ENCODE measurements at regions of chr3 and their contacts with region 1.

Region 1: DNA sequence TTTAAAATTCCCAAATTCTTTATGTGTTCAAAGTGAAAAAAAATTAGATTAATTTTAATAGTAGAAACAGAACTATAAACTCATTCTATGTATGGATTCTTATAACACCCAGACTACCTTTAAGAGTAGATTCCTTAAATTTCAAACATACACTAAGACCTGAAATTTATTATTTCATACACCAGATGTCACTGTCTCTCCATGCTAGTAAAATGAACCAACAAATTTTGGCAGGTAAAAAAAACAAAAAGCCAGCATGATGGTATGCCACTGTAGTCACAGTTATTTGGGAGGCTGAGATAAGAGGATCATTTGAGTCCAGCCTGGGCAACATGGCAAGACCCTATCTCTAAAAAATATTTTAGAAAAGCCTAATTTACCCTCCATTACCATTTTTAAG is 461.3 kb upstream of the NAALADL2 start:
- DNase-seq: peak in 1 of 35 experiments; percentile 19
- ATAC-seq: no peak
- H3K4me3 ChIP-seq: no peak overlapping the region
- H3K4me3 Mint-ChIP-seq: no peak overlapping the region
- H3K27ac ChIP-seq: no peak overlapping the region
- H3K27ac Mint-ChIP-seq: no peak overlapping the region
- H3K4me1 ChIP-seq: no peaks in the 10 kb centered on the region
- H3K4me1 Mint-ChIP-seq: no peaks in the 10 kb centered on the region
- H3K27me3 ChIP-seq: no peaks in the 10 kb centered on the region
- H3K27me3 Mint-ChIP-seq: peaks cover 0 to 4% of the 10 kb centered on the region in 2 donors

Region 2: DNA sequence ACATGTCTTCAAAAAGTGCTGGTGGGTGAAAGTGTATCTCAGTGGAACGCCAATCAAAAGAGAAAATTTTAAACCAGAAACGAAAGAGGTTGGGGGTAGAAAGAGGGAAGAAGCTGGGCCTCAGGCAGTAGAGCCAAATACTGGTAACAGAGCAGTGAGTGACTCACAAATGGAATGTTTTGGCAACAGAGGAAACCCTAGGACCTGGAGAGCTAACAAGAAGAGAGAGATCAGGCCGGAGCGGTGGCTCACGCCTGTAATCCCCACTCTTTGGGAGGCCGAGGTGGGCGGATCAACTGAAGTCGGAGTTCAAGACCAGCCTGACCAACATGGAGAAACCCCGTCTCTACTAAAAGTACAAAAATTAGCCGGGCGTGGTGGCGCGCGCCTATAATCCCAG is 10.5 kb after region 1 on chr3:
- CTCF ChIA-PET with region 1: interaction called in 1 of 2 experiments, 12 read pairs
- POLR2A ChIA-PET with region 1: no interaction called
- DNase-seq: no peak
- ATAC-seq: no peak
- H3K4me3 ChIP-seq: no peak overlapping the region
- H3K4me3 Mint-ChIP-seq: no peak overlapping the region
- H3K27ac ChIP-seq: no peak overlapping the region
- H3K27ac Mint-ChIP-seq: no peak overlapping the region
- H3K4me1 ChIP-seq: no peaks in the 10 kb centered on the region
- H3K4me1 Mint-ChIP-seq: no peaks in the 10 kb centered on the region
- H3K27me3 ChIP-seq: no peaks in the 10 kb centered on the region
- H3K27me3 Mint-ChIP-seq: no peaks in the 10 kb centered on the region

Region 3: DNA sequence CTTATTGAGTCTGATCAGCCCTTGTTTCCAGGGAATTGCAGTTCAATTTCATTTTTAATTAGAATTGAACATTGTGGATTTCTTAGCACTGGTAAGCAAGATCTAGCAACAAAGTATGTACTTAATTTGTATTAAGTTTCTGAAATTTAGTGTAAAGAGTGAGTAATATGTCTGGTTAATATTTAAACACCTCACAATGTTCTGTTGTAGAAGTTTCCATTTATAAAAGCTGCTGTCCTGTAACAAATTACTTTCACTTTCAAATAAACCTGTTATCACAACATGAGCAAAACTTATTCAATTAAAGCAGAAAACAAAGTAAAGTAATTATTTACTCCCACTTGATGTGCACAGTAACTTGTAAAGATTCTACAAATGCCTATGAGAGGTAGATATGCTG is 909.8 kb after region 1 on chr3:
- CTCF ChIA-PET with region 1: no interaction called
- POLR2A ChIA-PET with region 1: no interaction called
- DNase-seq: no peak
- ATAC-seq: no peak
- H3K4me3 ChIP-seq: no peak overlapping the region
- H3K4me3 Mint-ChIP-seq: no peak overlapping the region
- H3K27ac ChIP-seq: no peak overlapping the region
- H3K27ac Mint-ChIP-seq: no peak overlapping the region
- H3K4me1 ChIP-seq: no peaks in the 10 kb centered on the region
- H3K4me1 Mint-ChIP-seq: peaks cover 0 to 8% (median 6%) of the 10 kb centered on the region in 3 donors
- H3K27me3 ChIP-seq: no peaks in the 10 kb centered on the region
- H3K27me3 Mint-ChIP-seq: no peaks in the 10 kb centered on the region

Measured in T-cell (primary cell).